ENCODE measurements at regions of chr18 and their contacts with region 1.

Region 1: GRCh38 chr18:44786688-44787087 is 106.0 kb downstream of the SETBP1 start:
- DNase-seq: peak; percentile 64
- ATAC-seq: peak; percentile 77
- H3K4me3 ChIP-seq: peak overlapping the region in 4 of 5 experiments; percentile 6 to 59 (median 45)
- H3K4me3 Mint-ChIP-seq: peak overlapping the region; percentile 92
- H3K27ac ChIP-seq: peak overlapping the region; percentile 50 to 79
- H3K27ac Mint-ChIP-seq: peak overlapping the region; percentile 93
- H3K4me1 ChIP-seq: peaks cover 48 to 50% of the 10 kb centered on the region in 2 donors
- H3K4me1 Mint-ChIP-seq: peaks cover 71% of the 10 kb centered on the region
- H3K27me3 ChIP-seq: no peaks in the 10 kb centered on the region
- H3K27me3 Mint-ChIP-seq: no peaks in the 10 kb centered on the region
- CTCF ChIP-seq: no peak

Region 2: DNA sequence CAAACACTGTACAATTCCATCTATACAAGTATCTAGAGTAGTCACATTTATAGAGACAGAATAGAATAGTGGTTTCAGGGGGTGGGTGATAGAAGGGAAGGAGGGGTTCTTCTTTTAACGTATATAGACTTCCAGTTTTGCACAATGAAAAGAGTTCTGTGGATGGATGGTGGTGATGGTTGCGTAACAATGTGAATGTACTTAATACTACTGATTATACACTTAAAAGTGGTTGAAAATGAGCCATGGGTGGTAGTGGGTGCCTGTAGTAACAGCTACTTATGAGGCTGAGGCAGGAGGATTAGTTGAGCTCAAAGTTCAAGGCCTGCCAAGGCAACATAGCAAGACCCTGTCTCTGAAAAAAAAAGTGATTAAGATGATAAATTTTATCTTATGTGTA is 20.2 kb before region 1 on chr18:
- CTCF ChIA-PET with region 1: interaction called, 6 read pairs
- POLR2A ChIA-PET with region 1: no interaction called
- intact Hi-C with region 1: loop called (anchors 2 kb)
- DNase-seq: no peak
- ATAC-seq: no peak
- H3K4me3 ChIP-seq: no peak overlapping the region
- H3K4me3 Mint-ChIP-seq: no peak overlapping the region
- H3K27ac ChIP-seq: peak overlapping the region in 1 of 2 donors; percentile 87
- H3K27ac Mint-ChIP-seq: peak overlapping the region; percentile 78
- H3K4me1 ChIP-seq: peaks cover 84% of the 10 kb centered on the region in 2 donors
- H3K4me1 Mint-ChIP-seq: peaks cover 94% of the 10 kb centered on the region
- H3K27me3 ChIP-seq: no peaks in the 10 kb centered on the region
- H3K27me3 Mint-ChIP-seq: no peaks in the 10 kb centered on the region
- CTCF ChIP-seq: no peak

Region 3: DNA sequence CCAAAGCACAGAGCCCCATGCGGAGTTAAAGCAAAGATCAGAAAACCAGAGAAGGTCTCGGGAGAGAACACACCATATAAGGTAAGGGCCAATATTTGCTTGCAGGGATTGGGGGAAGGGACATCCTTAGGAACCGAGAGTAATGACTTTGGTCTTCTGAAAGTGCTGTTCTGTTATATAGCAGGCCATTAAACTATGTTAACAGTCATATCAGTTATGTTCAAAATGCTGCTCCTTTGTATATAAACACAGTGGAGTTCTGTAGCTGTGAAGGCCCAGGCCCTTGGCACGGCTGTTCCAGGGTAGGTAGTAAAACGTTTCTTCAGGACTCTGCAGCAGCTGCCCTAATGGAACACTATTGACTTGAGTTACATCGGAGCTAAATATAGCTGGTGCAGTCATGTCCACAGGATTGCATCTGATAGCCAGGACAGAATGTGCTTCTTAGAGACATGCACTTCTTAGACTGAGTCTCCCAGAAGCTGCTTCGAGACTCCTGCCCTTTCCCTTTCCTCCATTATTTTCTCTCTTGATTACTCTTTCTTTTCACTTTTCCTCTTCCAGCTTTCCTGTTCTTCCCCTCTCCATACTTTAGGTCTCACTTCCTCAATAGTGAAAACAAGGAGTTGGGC is 16.4 kb after region 1 on chr18:
- CTCF ChIA-PET with region 1: no interaction called
- POLR2A ChIA-PET with region 1: no interaction called
- intact Hi-C with region 1: no loop called
- DNase-seq: no peak
- ATAC-seq: no peak
- H3K4me3 ChIP-seq: no peak overlapping the region
- H3K4me3 Mint-ChIP-seq: no peak overlapping the region
- H3K27ac ChIP-seq: no peak overlapping the region
- H3K27ac Mint-ChIP-seq: peak overlapping the region; percentile 27
- H3K4me1 ChIP-seq: peaks cover 44 to 48% of the 10 kb centered on the region in 2 donors
- H3K4me1 Mint-ChIP-seq: peaks cover 88% of the 10 kb centered on the region
- H3K27me3 ChIP-seq: no peaks in the 10 kb centered on the region
- H3K27me3 Mint-ChIP-seq: no peaks in the 10 kb centered on the region
- CTCF ChIP-seq: no peak

Region 4: DNA sequence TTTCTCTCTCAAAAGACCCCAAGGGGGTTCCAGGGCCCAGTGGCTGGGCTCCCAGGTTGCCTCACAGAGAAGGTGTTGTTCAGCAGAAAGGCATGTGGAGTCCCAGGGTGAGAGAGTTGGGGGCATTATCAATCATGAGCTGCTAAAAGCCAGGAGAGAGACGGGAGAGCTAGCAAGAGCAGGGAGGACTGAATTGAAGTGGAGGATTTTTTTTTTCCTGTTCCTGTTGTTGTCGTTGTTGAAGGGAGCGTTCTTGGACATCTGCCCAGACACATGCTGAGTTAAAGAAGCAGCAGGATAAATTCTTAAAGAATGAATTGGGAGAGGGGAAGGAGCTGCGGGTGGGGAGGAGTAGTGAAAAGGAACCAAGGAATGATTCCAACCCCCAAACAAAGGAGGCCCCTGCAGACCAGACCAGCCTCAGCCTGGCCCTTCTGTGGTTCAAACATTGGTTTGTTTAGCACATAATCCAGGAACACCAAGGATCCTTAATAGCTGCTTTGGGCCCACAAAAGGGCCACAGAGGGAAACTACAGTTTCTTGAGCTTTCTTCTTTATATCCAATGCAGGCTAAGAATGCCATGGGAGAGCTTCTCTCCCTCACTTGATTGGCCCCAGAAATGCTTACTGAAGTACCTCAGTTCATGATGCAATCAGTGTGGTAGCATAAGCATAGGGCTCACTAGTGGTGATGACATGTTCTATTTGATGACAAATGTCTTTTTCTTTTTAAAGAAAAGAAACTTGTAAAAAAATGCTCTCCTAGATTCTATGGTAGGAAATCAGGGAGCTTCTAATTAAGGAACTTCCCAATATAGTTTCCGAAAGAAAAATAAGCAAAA is 40.0 kb after region 1 on chr18:
- CTCF ChIA-PET with region 1: no interaction called
- POLR2A ChIA-PET with region 1: no interaction called
- intact Hi-C with region 1: loop called (anchors 5 kb)
- DNase-seq: no peak
- ATAC-seq: no peak
- H3K4me3 ChIP-seq: no peak overlapping the region
- H3K4me3 Mint-ChIP-seq: no peak overlapping the region
- H3K27ac ChIP-seq: no peak overlapping the region
- H3K27ac Mint-ChIP-seq: no peak overlapping the region
- H3K4me1 ChIP-seq: peaks cover 27 to 28% of the 10 kb centered on the region in 2 donors
- H3K4me1 Mint-ChIP-seq: peaks cover 59% of the 10 kb centered on the region
- H3K27me3 ChIP-seq: no peaks in the 10 kb centered on the region
- H3K27me3 Mint-ChIP-seq: no peaks in the 10 kb centered on the region
- CTCF ChIP-seq: no peak